ENCODE measurements at regions of chr19 and their contacts with region 1.

Region 1: GRCh38 chr19:36114763-36115452 is at the start of gene POLR2I:
- DNase-seq: peak; percentile 99 to 100 (median 99)
- H3K4me3 ChIP-seq: peak within 1 kb of the TSS; percentile 53 to 90 (median 85)
- H3K4me3 Mint-ChIP-seq: peak within 1 kb of the TSS; percentile 89 to 94
- H3K27ac ChIP-seq: peak within 1 kb of the TSS; percentile 68 to 80
- H3K27ac Mint-ChIP-seq: peak within 1 kb of the TSS; percentile 88 to 97 (median 96)
- H3K4me1 ChIP-seq: peaks cover 25 to 34% of the 10 kb centered on the region in 2 donors
- H3K4me1 Mint-ChIP-seq: peaks cover 26% of the 10 kb centered on the region
- H3K27me3 ChIP-seq: no peaks in the 10 kb centered on the region
- H3K27me3 Mint-ChIP-seq: peaks cover 0 to 7% (median 0%) of the 10 kb centered on the region in 3 donors
- CTCF ChIP-seq: no peak
- polyA plus RNA-seq, gene POLR2I: 21.2 to 73.9 (median 57.9) TPM

Region 2: DNA sequence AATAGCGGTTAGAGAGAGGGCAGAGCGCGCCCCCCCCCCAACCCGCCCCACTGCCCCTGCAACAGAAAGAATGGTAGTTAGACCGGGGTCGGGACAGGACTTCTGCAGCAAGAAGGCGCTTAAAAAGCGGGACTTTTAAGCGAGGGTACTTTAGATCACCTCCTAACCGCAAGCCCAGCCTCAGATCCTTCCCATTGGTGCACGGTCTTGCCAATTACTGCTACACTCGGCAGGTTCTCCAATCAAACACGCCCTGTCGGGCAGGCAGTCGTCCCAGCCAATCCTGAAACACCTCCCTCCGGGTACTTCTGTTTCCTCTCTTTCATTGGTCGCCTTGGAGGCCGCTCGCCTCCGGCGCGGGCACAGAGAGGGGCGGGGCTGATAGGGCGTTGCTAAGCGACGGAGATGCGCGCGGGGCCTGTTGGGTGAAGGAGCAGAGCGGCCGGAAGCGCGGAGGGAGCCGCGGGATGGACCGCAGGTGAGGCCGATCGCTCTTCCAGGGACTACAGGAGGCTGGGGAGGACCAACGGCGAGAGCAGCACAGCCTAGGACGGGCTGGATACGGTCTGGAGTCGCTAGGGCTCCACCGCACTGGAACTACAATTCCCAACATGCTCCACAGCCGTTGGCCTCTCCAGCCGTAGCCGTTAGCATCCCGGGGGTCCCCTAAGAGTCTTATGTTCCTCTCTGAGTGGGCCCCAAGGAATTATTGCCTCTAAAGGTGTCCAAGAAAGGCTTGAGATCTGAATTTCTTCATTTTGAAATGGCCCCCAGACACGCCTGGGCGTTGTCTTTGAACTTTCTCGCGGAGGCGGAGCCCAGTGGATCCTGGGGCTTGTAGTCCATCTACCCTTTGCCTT is 356.9 kb before region 1 on chr19 and contains the start of gene PROSER3:
- intact Hi-C with region 1: loop called in 1 of 2 experiments (anchors 10 kb)
- DNase-seq: peak; percentile 98 to 99 (median 99)
- H3K4me3 ChIP-seq: peak within 1 kb of the TSS; percentile 91 to 100 (median 96)
- H3K4me3 Mint-ChIP-seq: peak within 1 kb of the TSS; percentile 93 to 94
- H3K27ac ChIP-seq: peak within 1 kb of the TSS; percentile 74 to 95
- H3K27ac Mint-ChIP-seq: peak within 1 kb of the TSS; percentile 76 to 96 (median 93)
- H3K4me1 ChIP-seq: peaks cover 29 to 41% of the 10 kb centered on the region in 2 donors
- H3K4me1 Mint-ChIP-seq: peaks cover 32% of the 10 kb centered on the region
- H3K27me3 ChIP-seq: peaks cover 9 to 21% of the 10 kb centered on the region in 2 donors
- H3K27me3 Mint-ChIP-seq: peaks cover 18 to 30% (median 25%) of the 10 kb centered on the region in 3 donors
- CTCF ChIP-seq: no peak
- polyA plus RNA-seq, gene PROSER3: 1.8 to 14.7 (median 2.9) TPM

Region 3: DNA sequence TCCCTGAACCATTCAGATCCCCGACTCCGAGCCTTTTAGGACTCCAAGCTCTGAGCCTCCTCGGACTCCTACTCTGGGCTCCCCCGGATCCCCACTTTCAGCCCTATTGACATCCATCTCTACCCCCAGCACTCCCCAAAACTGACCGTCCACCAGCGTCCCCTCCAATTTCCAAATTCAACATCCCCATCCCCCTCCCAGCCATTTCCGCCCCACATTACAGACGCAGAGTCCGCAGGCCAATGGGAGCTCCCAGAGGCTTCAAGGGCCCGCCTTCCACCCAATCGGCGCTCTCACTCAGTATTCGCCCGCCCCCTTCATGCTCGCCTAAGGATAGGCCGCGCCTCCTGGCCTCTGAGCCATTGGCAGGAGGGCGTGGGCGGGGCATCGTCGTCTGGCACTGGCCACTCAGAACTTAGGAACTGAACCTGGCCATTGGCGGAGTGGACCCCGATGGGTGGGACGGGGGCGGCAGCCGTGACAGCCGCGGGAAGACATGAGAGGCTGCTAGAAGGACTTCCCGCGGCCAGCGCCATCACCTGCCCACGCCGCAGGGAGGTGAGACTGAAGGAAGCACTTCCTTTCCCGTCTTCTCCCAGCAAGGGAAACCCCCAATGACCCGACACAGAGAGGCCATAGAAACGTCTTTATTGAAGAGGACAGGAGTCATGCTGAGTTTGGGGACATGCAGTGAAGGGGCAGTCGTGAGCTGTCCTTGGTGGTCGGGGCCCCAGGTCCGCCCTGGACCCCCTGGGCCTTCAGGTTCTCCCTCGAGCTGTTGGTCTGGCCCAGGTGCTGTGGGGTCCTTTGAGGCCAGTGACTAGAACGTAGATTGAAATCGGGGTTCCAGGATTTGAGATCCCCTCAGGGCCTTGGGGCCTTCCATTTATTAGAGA is 100.6 kb before region 1 on chr19 and contains the start of gene ALKBH6:
- intact Hi-C with region 1: loop called in 1 of 2 experiments (anchors 5 kb)
- DNase-seq: peak; percentile 96 to 99 (median 97)
- H3K4me3 ChIP-seq: peak within 1 kb of the TSS; percentile 71 to 89 (median 83)
- H3K4me3 Mint-ChIP-seq: peak within 1 kb of the TSS; percentile 97 to 99
- H3K27ac ChIP-seq: peak within 1 kb of the TSS; percentile 56 to 86
- H3K27ac Mint-ChIP-seq: peak within 1 kb of the TSS; percentile 94 to 99 (median 96)
- H3K4me1 ChIP-seq: peaks cover 14 to 24% of the 10 kb centered on the region in 2 donors
- H3K4me1 Mint-ChIP-seq: peaks cover 31% of the 10 kb centered on the region
- H3K27me3 ChIP-seq: peaks cover 0 to 8% of the 10 kb centered on the region in 2 donors
- H3K27me3 Mint-ChIP-seq: peaks cover 10 to 12% (median 12%) of the 10 kb centered on the region in 3 donors
- CTCF ChIP-seq: no peak
- polyA plus RNA-seq, gene ALKBH6: 13.1 to 29.3 (median 16.1) TPM

Region 4: GRCh38 chr19:36081385-36081784 is 33.5 kb before region 1 on chr19:
- intact Hi-C with region 1: no loop called
- DNase-seq: no peak
- H3K4me3 ChIP-seq: no peak overlapping the region
- H3K4me3 Mint-ChIP-seq: no peak overlapping the region
- H3K27ac ChIP-seq: no peak overlapping the region
- H3K27ac Mint-ChIP-seq: peak overlapping the region in 3 of 7 donors; percentile 34 to 59 (median 54)
- H3K4me1 ChIP-seq: no peaks in the 10 kb centered on the region
- H3K4me1 Mint-ChIP-seq: no peaks in the 10 kb centered on the region
- H3K27me3 ChIP-seq: no peaks in the 10 kb centered on the region
- H3K27me3 Mint-ChIP-seq: peaks cover 0 to 4% (median 0%) of the 10 kb centered on the region in 3 donors
- CTCF ChIP-seq: no peak

Region 5: DNA sequence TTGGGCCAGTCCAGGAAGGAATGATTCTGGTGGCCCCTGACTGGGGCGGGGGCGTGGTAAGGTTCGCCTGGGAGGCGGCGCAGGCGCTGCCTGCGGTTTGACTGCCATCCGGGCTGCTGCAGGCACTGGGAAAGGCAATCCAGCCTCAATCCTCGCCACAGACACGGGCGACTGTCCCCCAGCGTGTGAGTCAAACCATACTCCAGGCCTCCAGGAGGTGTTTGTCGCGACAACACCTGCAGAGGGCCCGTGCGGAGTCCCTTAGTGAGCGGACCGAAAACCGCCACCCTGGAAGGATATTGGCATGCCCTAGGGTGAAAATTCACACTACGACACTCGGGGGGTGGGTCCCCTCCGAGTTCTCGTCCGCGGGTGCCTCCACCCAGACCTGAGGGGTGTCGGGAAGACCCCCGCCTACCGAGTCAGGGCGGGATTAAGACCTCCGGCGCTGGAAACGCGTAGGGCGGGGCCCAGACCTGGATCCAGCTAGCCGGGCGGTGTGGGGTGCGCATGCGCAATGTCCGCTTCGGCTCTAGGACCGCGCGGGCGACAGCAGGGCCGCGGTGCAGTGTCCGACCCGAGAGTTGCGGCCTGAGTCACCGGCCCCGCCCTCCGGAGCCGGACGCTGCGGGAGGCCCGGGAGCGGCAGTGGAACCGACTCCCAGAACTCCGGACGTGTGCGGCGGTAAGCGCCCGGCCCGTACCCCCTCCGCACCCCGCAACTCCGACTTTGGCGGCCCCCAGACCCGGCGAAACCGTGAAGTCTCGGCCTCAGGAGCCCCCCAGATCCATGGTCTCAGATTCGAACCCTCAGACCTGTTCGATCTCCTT is 24.8 kb after region 1 on chr19 and contains the start of gene CAPNS1:
- intact Hi-C with region 1: loop called in 1 of 2 experiments (anchors 2 kb)
- DNase-seq: peak; percentile 93 to 96 (median 94)
- H3K4me3 ChIP-seq: peak within 1 kb of the TSS; percentile 92 to 100 (median 96)
- H3K4me3 Mint-ChIP-seq: peak within 1 kb of the TSS; percentile 98 to 99
- H3K27ac ChIP-seq: peak within 1 kb of the TSS; percentile 90 to 98
- H3K27ac Mint-ChIP-seq: peak within 1 kb of the TSS; percentile 96 to 99 (median 98)
- H3K4me1 ChIP-seq: peaks cover 28 to 44% of the 10 kb centered on the region in 2 donors
- H3K4me1 Mint-ChIP-seq: peaks cover 30% of the 10 kb centered on the region
- H3K27me3 ChIP-seq: no peaks in the 10 kb centered on the region
- H3K27me3 Mint-ChIP-seq: peaks cover 0 to 9% (median 3%) of the 10 kb centered on the region in 3 donors
- CTCF ChIP-seq: no peak
- polyA plus RNA-seq, gene CAPNS1: 239 to 740 (median 282) TPM

Region 6: DNA sequence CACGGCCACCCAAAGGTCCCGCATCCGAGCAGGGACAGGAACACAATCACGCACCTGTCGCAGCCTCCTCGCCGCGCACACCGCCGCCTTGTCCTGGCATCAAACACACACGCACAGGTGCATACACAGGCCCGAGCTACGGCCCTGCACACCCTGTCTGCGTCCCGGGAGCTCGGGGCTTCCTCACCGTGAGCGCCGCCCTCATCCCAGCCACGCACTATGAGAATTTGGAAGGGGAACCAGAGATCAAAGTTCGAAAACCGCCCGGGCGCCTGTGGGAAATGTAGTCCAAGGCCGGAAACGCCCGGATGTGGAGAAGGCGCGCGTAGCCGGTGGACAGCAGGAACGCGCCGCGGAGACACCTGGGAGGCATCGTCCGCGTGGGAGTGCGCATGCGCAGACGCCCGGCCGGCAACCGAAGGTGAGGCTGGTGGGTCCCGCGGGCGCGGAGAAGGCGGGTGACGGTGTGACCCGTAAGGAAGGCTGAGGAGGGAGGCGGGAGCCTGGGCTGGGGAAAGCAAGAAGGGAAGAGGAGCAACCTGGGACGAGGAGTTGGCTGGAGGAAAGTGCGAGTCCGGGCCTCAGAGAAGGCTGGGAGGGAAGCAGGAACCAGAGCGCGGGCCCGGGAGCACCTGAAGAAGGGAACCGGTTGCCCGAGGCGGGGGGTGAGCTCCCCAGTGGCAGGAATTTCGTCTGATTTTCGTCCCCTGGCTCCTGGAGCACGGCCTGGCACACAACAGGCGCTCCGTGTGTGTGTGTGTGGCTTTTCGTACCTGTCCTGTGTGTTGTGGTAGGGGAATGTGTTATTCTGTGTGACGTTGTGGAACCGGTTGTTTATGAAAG is 572.5 kb after region 1 on chr19 and contains the start of gene ZNF567:
- intact Hi-C with region 1: loop called in 1 of 2 experiments (anchors 10 kb)
- DNase-seq: peak; percentile 88 to 90 (median 89)
- H3K4me3 ChIP-seq: peak within 1 kb of the TSS; percentile 35 to 92 (median 63)
- H3K4me3 Mint-ChIP-seq: peak within 1 kb of the TSS; percentile 96 to 99
- H3K27ac ChIP-seq: peak within 1 kb of the TSS; percentile 13 to 77
- H3K27ac Mint-ChIP-seq: peak within 1 kb of the TSS; percentile 66 to 90 (median 83)
- H3K4me1 ChIP-seq: peaks cover 15 to 23% of the 10 kb centered on the region in 2 donors
- H3K4me1 Mint-ChIP-seq: peaks cover 24% of the 10 kb centered on the region
- H3K27me3 ChIP-seq: no peaks in the 10 kb centered on the region
- H3K27me3 Mint-ChIP-seq: peaks cover 0 to 1% (median 0%) of the 10 kb centered on the region in 3 donors
- CTCF ChIP-seq: no peak
- polyA plus RNA-seq, gene ZNF567: 0.84 to 1.7 (median 1.5) TPM